Esophagus muscularis mucosa (tissue), 4 donors: ENCODE measurements at regions of chr11 and their contacts with region 1.

Region 1: DNA sequence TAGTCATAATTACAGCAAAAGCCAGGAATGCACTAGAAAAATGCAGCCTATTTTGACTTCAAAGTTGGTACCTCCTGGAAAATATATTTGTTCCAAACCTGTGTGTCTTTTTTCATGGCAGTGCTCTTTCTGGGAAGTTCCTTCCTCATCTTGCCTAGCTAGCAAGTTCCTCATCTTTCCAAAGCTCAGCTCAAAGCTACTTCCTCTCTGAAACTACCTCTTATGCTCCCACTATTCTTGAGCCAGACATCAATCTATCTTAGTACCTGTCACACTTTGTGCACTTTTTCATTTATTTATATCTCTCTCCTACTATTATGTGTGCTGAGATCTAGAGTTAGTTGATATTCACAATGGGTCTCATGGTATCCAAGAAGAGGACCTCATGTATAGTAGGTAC is 191.6 kb upstream of the CCDC90B start:
- DNase-seq: no peak
- H3K4me3 ChIP-seq: no peak overlapping the region
- H3K27ac ChIP-seq: no peak overlapping the region
- H3K4me1 ChIP-seq: no peaks in the 10 kb centered on the region
- H3K27me3 ChIP-seq: no peaks in the 10 kb centered on the region
- CTCF ChIP-seq: no peak
- EP300 ChIP-seq: no peak
- POLR2A ChIP-seq: no peak

Region 2: GRCh38 chr11:83132191-83132590 is 345.6 kb before region 1 on chr11:
- intact Hi-C with region 1: no loop called
- DNase-seq: no peak
- H3K4me3 ChIP-seq: no peak overlapping the region
- H3K27ac ChIP-seq: no peak overlapping the region
- H3K4me1 ChIP-seq: no peaks in the 10 kb centered on the region
- H3K27me3 ChIP-seq: no peaks in the 10 kb centered on the region
- CTCF ChIP-seq: no peak
- EP300 ChIP-seq: no peak
- POLR2A ChIP-seq: no peak

Region 3: DNA sequence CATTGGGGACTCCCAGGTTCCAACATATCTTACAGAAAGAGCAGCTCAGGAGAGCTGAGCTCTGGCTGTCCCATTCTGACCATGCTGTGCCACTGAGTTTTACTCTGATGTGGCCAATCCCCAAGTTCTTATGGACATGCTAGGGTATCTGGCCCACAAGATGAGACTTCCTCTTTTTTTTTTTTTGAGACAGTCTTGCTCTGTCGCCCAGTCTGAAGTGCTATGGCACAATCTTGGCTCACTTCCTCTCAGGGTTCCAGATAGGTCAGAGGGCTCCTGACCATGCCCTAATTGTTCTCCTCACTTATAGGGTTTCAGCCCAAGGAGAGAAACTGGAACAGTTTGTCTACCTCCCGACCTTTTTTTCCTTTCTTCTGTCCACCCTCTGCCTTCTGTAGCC is 39.3 kb before region 1 on chr11:
- intact Hi-C with region 1: no loop called
- DNase-seq: no peak
- H3K4me3 ChIP-seq: no peak overlapping the region
- H3K27ac ChIP-seq: no peak overlapping the region
- H3K4me1 ChIP-seq: no peaks in the 10 kb centered on the region
- H3K27me3 ChIP-seq: no peaks in the 10 kb centered on the region
- CTCF ChIP-seq: no peak
- EP300 ChIP-seq: no peak
- POLR2A ChIP-seq: no peak

Region 4: GRCh38 chr11:83717551-83717950 is 239.8 kb after region 1 on chr11:
- intact Hi-C with region 1: loop called (anchors 5 kb)
- DNase-seq: no peak
- H3K4me3 ChIP-seq: no peak overlapping the region
- H3K27ac ChIP-seq: no peak overlapping the region
- H3K4me1 ChIP-seq: no peaks in the 10 kb centered on the region
- H3K27me3 ChIP-seq: no peaks in the 10 kb centered on the region
- CTCF ChIP-seq: no peak
- EP300 ChIP-seq: no peak
- POLR2A ChIP-seq: no peak

Region 5: GRCh38 chr11:84355911-84356310 is 878.1 kb after region 1 on chr11:
- intact Hi-C with region 1: no loop called
- DNase-seq: no peak
- H3K4me3 ChIP-seq: no peak overlapping the region
- H3K27ac ChIP-seq: no peak overlapping the region
- H3K4me1 ChIP-seq: no peaks in the 10 kb centered on the region
- H3K27me3 ChIP-seq: no peaks in the 10 kb centered on the region
- CTCF ChIP-seq: no peak
- EP300 ChIP-seq: no peak
- POLR2A ChIP-seq: no peak